ENCODE measurements at regions of chr18 and their contacts with region 1.

Region 1: GRCh38 chr18:26839609-26840008 is 25.9 kb downstream of the AQP4 start:
- DNase-seq: no peak
- ATAC-seq: no peak
- H3K4me3 ChIP-seq: no peak overlapping the region
- H3K27ac ChIP-seq: no peak overlapping the region
- H3K4me1 ChIP-seq: no peaks in the 10 kb centered on the region
- H3K27me3 ChIP-seq: no peaks in the 10 kb centered on the region
- CTCF ChIP-seq: no peak
- EP300 ChIP-seq: no peak
- POLR2A ChIP-seq: no peak
- RAD21 ChIP-seq: no peak

Region 2: DNA sequence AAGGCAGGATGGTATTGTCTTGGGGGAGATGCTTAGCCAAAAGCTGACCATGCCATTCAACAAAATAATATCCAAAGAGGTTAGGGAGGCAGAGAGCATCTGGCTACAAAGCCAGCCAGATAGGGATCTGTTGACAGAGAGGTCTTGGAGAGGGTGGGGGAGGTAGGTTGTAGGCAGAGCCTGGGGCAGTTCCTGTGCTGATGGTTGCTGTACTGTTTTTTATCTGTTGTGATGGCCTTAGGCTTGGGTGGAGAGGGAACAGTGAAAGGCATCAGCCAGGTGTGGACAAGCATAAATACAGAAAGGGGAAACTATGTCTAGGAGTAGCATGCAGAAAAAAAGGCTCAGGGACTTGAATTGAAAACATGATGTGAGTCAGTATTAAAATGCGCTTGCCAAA is 75.0 kb before region 1 on chr18:
- CTCF ChIA-PET with region 1: no interaction called
- POLR2A ChIA-PET with region 1: no interaction called
- RAD21 ChIA-PET with region 1: no interaction called
- SMC1A ChIA-PET with region 1: no interaction called
- in situ Hi-C with region 1: no loop called
- intact Hi-C with region 1: no loop called
- DNase-seq: no peak
- ATAC-seq: no peak
- H3K4me3 ChIP-seq: no peak overlapping the region
- H3K27ac ChIP-seq: no peak overlapping the region
- H3K4me1 ChIP-seq: no peaks in the 10 kb centered on the region
- H3K27me3 ChIP-seq: no peaks in the 10 kb centered on the region; a peak in 1 of 4 replicates
- CTCF ChIP-seq: no peak
- EP300 ChIP-seq: no peak
- POLR2A ChIP-seq: no peak
- RAD21 ChIP-seq: no peak

Region 3: DNA sequence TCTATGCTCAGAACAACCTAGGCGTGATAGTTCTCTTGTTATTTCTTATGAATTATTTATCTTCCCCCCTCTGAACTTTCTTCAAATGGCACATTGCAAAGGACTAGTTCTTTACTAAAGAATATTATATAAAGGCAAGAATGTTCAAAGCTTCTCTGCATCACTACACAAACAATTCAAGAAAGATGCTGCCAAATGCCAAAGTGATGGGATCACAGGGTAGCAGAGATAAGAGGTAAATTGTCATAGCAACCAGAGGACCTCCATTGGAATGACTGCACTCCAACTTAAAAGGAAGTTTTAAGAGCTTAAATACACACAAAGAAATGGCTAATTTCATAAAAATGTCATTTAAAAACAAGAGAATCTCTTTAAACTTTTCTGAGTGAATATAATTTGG is 46.9 kb before region 1 on chr18:
- CTCF ChIA-PET with region 1: no interaction called
- POLR2A ChIA-PET with region 1: no interaction called
- RAD21 ChIA-PET with region 1: no interaction called
- SMC1A ChIA-PET with region 1: no interaction called
- in situ Hi-C with region 1: no loop called
- intact Hi-C with region 1: no loop called
- DNase-seq: no peak
- ATAC-seq: no peak
- H3K4me3 ChIP-seq: no peak overlapping the region
- H3K27ac ChIP-seq: no peak overlapping the region
- H3K4me1 ChIP-seq: no peaks in the 10 kb centered on the region
- H3K27me3 ChIP-seq: no peaks in the 10 kb centered on the region; a peak in 1 of 4 replicates
- CTCF ChIP-seq: no peak
- EP300 ChIP-seq: no peak
- POLR2A ChIP-seq: no peak
- RAD21 ChIP-seq: no peak

Region 4: GRCh38 chr18:27164905-27165304 is 325.3 kb after region 1 on chr18:
- CTCF ChIA-PET with region 1: no interaction called
- POLR2A ChIA-PET with region 1: no interaction called
- RAD21 ChIA-PET with region 1: no interaction called
- SMC1A ChIA-PET with region 1: no interaction called
- in situ Hi-C with region 1: no loop called
- intact Hi-C with region 1: loop called (anchors 10 kb)
- DNase-seq: no peak
- ATAC-seq: no peak
- H3K4me3 ChIP-seq: no peak overlapping the region
- H3K27ac ChIP-seq: no peak overlapping the region
- H3K4me1 ChIP-seq: no peaks in the 10 kb centered on the region
- H3K27me3 ChIP-seq: no peaks in the 10 kb centered on the region
- CTCF ChIP-seq: no peak
- EP300 ChIP-seq: no peak
- POLR2A ChIP-seq: no peak
- RAD21 ChIP-seq: no peak

Measured in GM12878 (cell line).